Right ventricle myocardium superior (tissue), 1 donor: ENCODE measurements at regions of chr4 and their contacts with region 1.

Region 1: DNA sequence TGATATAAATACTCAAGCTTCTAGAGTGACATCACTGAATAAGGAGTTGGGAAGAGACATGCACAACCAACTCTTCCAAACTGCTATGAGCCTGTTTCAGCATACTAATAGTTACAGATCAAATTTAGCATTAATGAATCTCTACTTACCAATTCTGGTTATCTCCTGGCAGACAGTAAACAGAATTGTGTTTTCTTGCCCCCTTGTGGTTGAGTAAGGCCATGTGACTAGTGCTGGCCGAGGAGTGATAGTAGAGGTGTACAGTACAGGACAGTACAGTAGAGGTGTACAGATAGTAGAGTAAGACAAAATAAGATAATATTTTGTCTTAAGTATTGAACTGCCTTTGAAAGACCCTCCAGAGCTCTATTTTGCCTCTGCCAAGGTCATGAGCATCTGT is 681.4 kb downstream of the GABRG1 start:
- DNase-seq: no peak
- ATAC-seq: peak; percentile 63

Region 2: GRCh38 chr4:44842531-44842930 is 599.9 kb before region 1 on chr4:
- intact Hi-C with region 1: no loop called
- DNase-seq: no peak
- ATAC-seq: no peak

Region 3: GRCh38 chr4:44927399-44928380 is 514.8 kb before region 1 on chr4:
- intact Hi-C with region 1: loop called (anchors 5 kb)
- DNase-seq: no peak
- ATAC-seq: peak; percentile 55

Region 4: GRCh38 chr4:45183905-45184304 is 258.6 kb before region 1 on chr4:
- intact Hi-C with region 1: no loop called
- DNase-seq: no peak
- ATAC-seq: no peak